Tibial artery (tissue), 4 donors: ENCODE measurements at regions of chr9 and their contacts with region 1.

Region 1: DNA sequence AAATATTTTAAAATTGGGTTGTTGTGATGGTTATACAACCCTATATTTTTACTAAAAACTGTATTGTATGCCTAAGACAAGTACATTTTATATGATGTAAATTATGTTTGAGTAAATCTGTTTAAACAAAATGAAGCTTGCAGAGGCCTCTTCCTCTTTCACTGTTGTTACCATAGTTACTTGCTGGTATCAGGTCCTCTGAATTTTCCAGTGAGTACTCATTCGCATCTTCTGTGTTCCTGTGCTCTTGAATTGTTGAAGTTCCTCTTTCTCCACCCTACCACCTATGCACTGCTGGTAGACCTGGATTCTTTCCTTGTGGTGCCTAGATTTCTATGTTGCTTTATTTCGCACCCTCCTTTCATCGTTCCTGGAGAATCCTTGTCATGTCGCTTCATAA is 938.5 kb upstream of the ACO1 start:
- DNase-seq: no peak
- H3K4me3 ChIP-seq: no peak overlapping the region
- H3K27ac ChIP-seq: no peak overlapping the region
- H3K4me1 ChIP-seq: no peaks in the 10 kb centered on the region
- H3K27me3 ChIP-seq: no peaks in the 10 kb centered on the region
- CTCF ChIP-seq: no peak

Region 2: DNA sequence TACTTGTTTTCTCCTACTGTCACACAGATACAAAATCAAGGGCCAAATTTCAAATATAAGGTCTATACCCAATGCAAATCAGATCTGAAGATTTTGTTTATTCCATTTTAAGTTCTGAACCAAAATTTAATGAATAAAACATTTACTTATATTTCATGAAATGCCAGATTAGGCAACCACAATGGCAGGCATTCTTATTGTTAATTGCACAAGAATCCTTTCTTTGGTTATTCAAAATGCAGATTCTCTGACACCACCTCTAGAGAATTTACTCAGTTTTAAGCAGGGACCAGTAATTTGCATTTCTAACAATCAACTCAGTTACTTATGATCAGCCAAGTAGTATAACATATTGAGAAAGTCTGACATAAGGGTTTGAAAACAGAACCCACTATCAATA is 33.9 kb before region 1 on chr9:
- intact Hi-C with region 1: loop called (anchors 10 kb)
- DNase-seq: no peak
- H3K4me3 ChIP-seq: no peak overlapping the region
- H3K27ac ChIP-seq: no peak overlapping the region
- H3K4me1 ChIP-seq: no peaks in the 10 kb centered on the region
- H3K27me3 ChIP-seq: no peaks in the 10 kb centered on the region
- CTCF ChIP-seq: no peak